ENCODE measurements at regions of chr9 and their contacts with region 1.

Region 1: DNA sequence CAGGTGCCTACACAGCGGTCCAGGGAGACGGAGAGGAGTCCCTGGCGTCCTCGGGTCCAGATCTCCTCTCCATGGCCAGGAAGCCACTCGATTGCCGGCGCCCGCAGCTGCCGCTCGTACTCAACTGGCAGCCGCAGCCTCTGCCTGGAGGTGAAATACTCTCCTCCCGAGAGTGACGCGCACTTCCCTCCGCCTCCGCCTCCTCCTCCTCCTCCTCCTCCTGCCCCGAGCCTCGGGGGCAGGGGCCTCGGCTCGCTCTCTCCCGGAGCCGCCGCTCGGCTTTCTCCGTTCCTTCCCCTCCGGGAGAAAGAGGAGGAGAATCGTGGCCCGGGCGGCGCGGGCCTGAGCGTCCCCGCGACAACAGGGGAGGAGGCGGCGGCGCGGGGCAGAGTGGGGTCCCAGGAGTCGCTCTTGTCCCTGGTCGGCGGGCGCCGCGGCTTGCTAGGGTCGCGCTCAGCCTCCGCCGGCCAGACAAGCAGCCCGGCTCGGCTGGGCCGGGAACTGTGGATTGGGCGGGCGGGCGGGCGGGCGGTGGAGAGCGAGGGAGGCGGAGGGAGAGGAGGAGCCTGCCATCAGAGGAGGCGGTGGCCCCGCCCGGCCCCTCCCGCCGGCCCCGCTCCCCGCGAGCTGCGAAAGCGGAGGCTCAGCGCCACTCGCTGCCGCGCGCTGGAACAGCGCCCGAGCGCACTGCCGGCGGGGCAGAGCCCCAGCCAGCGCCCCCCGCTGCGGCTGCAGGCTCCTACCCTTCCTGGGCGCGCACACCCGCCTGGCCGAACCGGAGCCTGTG is at the start of gene CEMIP2:
- DNase-seq: peak; percentile 90 to 91
- ATAC-seq: peak; percentile 89 to 98 (median 92)
- H3K4me3 ChIP-seq: peak within 1 kb of the TSS; percentile 50 to 96 (median 88)
- H3K27ac ChIP-seq: peak within 1 kb of the TSS; percentile 92 to 99 (median 98)
- H3K4me1 ChIP-seq: peaks cover 4 to 53% (median 25%) of the 10 kb centered on the region in 9 donors
- H3K27me3 ChIP-seq: peaks cover 0 to 5% (median 0%) of the 10 kb centered on the region in 7 donors
- CTCF ChIP-seq: peak in 7 of 9 donors; percentile 14 to 67 (median 59)
- total RNA-seq, gene CEMIP2: 4.7 to 34.9 (median 11.0) TPM

Region 2: DNA sequence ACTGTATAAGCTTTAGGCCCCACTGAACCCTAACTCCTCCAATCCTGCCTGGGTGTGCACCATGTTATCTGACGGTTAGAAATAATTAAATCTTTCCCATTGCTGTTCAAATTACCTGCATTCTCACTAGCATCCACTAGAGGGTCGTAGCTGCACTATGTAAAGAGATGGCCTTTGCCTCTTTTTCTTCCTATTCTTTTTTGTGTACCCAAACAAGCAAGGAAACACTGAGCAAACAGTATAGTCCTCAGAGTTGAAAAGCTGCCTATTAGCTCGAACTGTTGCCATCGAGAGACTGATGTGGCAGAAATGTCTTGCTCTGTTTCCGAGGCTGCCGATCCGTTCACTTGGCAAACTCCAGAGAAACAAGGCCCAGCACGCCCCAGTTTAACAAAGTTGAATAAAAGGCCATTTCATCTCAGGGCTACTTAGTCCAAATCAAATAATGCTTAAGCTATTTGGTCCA is 483.4 kb before region 1 on chr9:
- intact Hi-C with region 1: loop called in 3 of 10 experiments (anchors 5 to 10 kb)
- DNase-seq: peak in 1 of 2 donors; percentile 46
- ATAC-seq: peak in 7 of 8 donors; percentile 49 to 74 (median 70)
- H3K4me3 ChIP-seq: no peak overlapping the region
- H3K27ac ChIP-seq: no peak overlapping the region
- H3K4me1 ChIP-seq: peaks cover 0 to 8% (median 0%) of the 10 kb centered on the region in 9 donors
- H3K27me3 ChIP-seq: no peaks in the 10 kb centered on the region
- CTCF ChIP-seq: peak; percentile 70 to 89 (median 83)

Region 3: GRCh38 chr9:71703172-71703872 is 65.3 kb before region 1 on chr9:
- intact Hi-C with region 1: loop called in 1 of 10 experiments (anchors 10 kb)
- DNase-seq: no peak
- ATAC-seq: peak in 3 of 8 donors; percentile 36 to 62 (median 57)
- H3K4me3 ChIP-seq: no peak overlapping the region
- H3K27ac ChIP-seq: no peak overlapping the region
- H3K4me1 ChIP-seq: peaks cover 0 to 30% (median 12%) of the 10 kb centered on the region in 9 donors
- H3K27me3 ChIP-seq: no peaks in the 10 kb centered on the region
- CTCF ChIP-seq: no peak

Region 4: GRCh38 chr9:71721855-71722254 is 46.7 kb before region 1 on chr9:
- intact Hi-C with region 1: loop called in 2 of 10 experiments (anchors 5 kb)
- DNase-seq: no peak
- ATAC-seq: no peak
- H3K4me3 ChIP-seq: no peak overlapping the region
- H3K27ac ChIP-seq: no peak overlapping the region
- H3K4me1 ChIP-seq: peaks cover 0 to 10% (median 0%) of the 10 kb centered on the region in 9 donors
- H3K27me3 ChIP-seq: no peaks in the 10 kb centered on the region
- CTCF ChIP-seq: no peak

Region 5: DNA sequence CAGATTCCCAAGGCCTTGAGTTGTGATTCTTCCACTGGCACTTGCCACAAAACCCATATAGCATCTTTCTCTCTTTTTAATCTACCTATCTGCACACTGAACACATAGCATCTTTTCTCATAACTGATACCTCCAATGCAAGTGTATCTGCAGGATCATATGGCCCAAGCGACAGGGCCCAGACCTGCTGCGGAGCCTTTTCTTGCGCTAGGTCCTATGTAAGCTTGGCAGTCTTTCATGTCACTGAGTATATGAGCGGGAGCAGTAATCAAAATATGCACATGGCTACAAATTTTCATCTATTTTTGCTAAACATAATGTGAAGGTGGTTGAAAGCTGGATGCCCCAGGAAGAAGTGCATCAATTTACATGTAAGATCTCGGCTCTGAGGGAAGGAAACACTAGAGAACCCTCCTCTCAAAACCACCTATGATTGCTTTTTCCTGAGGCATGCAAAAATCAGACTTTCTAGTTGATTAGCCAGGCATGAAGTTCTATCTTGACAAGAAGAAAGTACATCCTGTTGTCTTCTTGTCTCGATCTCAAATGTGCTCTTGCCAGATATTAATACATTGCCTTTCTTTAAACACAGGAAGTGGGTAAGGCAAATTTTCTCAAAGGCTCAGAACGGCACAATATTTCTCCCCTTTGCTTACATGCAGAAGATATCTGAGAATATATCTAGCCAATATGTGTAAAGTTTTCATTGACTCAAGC is 26.7 kb after region 1 on chr9:
- intact Hi-C with region 1: no loop called
- DNase-seq: no peak
- ATAC-seq: no peak
- H3K4me3 ChIP-seq: no peak overlapping the region
- H3K27ac ChIP-seq: peak overlapping the region in 1 of 10 donors; percentile 78
- H3K4me1 ChIP-seq: peaks cover 0 to 17% (median 0%) of the 10 kb centered on the region in 9 donors
- H3K27me3 ChIP-seq: no peaks in the 10 kb centered on the region
- CTCF ChIP-seq: no peak